ENCODE measurements at regions of chr2 and their contacts with region 1.

Region 1: GRCh38 chr2:96509114-96509846 is 4.1 kb upstream of the NEURL3 start:
- DNase-seq: peak; percentile 88

Region 2: GRCh38 chr2:96315400-96316071 is 193.7 kb before region 1 on chr2:
- CTCF ChIA-PET with region 1: no interaction called
- POLR2A ChIA-PET with region 1: no interaction called
- DNase-seq: no peak

Region 3: DNA sequence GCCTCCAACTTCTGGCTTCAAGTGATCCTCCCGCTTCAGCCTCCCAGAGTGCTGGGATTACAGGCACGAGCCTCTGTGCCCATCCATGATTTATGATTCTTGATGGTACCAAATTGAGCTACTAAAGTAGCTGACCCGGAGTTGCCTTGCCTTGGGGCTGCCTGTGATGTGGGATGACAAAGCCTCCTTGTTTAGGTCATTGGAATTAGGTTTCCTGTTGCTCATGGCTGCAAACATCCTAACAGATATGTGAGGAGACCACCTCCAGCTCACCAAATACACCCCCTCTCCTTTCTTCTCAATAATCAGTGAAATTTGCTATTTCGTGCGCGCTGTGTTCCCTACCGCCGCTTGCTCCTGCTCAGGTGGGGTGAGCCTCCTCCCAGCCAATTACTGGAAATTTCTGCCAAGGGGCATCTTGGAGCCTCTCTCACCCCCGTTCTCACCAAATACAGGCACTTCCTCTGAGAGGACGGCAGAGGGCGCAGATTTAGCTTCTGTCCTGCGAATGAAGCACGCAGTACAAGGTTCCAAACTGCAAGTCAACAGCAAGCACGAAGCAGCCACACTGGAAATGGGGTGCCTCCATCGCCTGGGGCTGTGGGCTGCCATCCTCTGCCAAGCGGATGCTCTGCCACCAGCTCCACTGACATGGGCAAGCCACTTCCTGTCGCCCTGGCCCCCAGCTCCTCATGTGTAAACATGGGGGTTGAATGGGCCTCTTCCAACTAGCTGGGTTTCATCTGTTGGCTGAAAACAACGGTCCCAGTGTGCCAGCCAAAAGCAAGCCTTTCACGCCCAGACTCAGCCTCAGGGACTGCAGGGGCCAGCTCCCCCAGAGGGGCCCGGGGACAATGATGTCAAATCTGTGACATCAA is 102.0 kb before region 1 on chr2:
- CTCF ChIA-PET with region 1: interaction called, 68 read pairs
- POLR2A ChIA-PET with region 1: interaction called, 4 read pairs
- DNase-seq: peak; percentile 79

Region 4: DNA sequence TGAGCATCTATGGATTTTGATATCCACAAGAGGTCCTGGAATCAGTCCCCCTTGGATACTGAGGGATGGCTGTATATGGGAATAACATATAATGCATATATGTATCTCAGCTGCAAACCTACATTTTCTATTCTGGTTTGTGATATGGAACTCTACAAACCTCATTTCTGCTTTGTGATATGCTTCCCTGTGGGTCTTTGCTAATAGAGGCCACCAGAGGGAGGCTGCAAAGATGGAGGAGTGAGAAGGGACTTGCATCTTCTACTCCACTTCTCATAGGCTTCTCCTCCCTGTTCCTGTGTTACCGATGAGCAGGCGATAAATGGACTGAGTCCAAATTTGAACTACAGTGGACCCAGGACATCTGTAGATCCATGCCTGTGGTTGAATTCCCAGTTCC is 65.1 kb after region 1 on chr2:
- CTCF ChIA-PET with region 1: no interaction called
- POLR2A ChIA-PET with region 1: no interaction called
- DNase-seq: no peak

Measured in HEK293T (cell line).